ENCODE measurements at regions of chr1 and their contacts with region 1.

Region 1: DNA sequence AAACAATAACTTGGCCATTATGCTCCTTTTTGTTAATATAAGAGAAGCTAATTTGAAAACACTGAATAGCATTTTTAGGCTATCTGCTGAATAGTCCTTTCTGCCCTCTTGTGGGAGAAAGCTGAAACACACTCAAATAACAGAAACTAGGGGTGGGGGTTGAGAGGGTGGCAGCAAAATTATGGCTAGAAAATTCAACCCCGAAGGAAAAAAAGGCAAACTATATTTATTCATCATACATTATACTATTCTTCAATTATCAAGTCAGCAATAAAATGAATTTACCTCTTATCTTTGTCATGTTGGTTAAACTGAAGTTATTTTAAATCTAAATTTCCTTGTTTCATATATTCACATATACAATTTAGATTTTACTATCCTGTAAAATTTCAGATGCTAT is 255.9 kb downstream of the FAF1 start:
- DNase-seq: no peak
- H3K4me3 Mint-ChIP-seq: no peak overlapping the region
- H3K27ac Mint-ChIP-seq: no peak overlapping the region
- H3K4me1 Mint-ChIP-seq: no peaks in the 10 kb centered on the region
- H3K27me3 Mint-ChIP-seq: no peaks in the 10 kb centered on the region

Region 2: GRCh38 chr1:50430010-50430405 is 274.1 kb before region 1 on chr1:
- intact Hi-C with region 1: loop called (anchors 5 kb)
- DNase-seq: no peak
- H3K4me3 Mint-ChIP-seq: no peak overlapping the region
- H3K27ac Mint-ChIP-seq: no peak overlapping the region
- H3K4me1 Mint-ChIP-seq: peaks cover 3% of the 10 kb centered on the region
- H3K27me3 Mint-ChIP-seq: peaks cover 79% of the 10 kb centered on the region